Activated CD8-positive, alpha-beta T cell treated with anti-CD3 and anti-CD28 coated beads for 36 hours (primary cell): ENCODE measurements at regions of chr10 and their contacts with region 1.

Region 1: DNA sequence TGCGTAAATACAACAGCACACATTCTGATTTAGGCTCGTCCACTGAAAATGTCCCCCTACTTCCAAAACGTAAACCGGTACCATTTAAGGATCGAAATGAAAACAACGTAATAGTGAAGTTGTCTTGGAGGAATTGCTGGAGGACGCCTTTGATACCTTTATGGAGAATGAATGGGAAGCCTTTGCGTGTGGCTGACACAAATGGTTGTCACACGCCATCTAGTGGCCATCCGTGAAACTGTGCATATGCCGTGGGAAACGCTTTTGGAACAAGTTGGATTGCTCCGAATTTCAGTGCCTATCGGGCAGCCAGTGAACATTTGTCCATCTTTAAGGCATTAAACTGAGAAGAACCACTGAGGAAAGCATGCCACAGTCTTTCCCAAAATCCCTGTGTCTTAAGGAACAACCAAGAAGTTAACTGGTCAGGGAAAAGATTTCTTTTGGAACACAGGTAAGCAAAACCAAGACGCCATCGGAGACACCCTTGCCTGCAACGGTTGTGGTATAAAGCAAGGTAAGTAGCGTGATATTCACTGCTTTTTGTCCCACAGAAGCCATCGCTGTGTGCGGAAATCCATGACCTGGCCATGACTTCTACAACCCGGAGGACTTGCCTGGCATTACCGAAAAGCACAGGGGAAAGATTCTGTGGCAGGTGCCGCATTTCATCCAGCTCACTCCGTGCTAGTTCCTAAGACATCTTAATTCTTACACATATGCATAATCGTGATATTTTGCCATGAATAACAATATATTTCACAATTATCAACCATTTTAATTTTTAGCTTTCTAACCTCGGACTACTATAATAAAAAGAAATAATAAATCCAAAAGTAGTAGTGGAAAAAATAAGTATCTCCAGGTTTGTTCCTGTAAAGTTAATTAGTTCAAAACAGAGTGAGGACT is 100.6 kb downstream of the FAM204A start:
- DNase-seq: peak; percentile 79
- ATAC-seq: no peak
- H3K4me3 Mint-ChIP-seq: no peak overlapping the region
- H3K27ac Mint-ChIP-seq: no peak overlapping the region
- H3K4me1 Mint-ChIP-seq: no peaks in the 10 kb centered on the region
- H3K27me3 Mint-ChIP-seq: peaks cover 35% of the 10 kb centered on the region
- CTCF ChIP-seq: peak; percentile 97

Region 2: GRCh38 chr10:117496616-117497028 is 744.9 kb before region 1 on chr10:
- CTCF ChIA-PET with region 1: interaction called, 64 read pairs
- POLR2A ChIA-PET with region 1: no interaction called
- intact Hi-C with region 1: loop called (anchors 2 kb)
- DNase-seq: peak; percentile 77
- ATAC-seq: peak; percentile 86
- H3K4me3 Mint-ChIP-seq: no peak overlapping the region
- H3K27ac Mint-ChIP-seq: no peak overlapping the region
- H3K4me1 Mint-ChIP-seq: no peaks in the 10 kb centered on the region
- H3K27me3 Mint-ChIP-seq: peaks cover 29% of the 10 kb centered on the region
- CTCF ChIP-seq: peak; percentile 95

Region 3: GRCh38 chr10:117972168-117972837 is 269.2 kb before region 1 on chr10:
- CTCF ChIA-PET with region 1: no interaction called
- POLR2A ChIA-PET with region 1: no interaction called
- intact Hi-C with region 1: no loop called
- DNase-seq: no peak
- ATAC-seq: no peak
- H3K4me3 Mint-ChIP-seq: no peak overlapping the region
- H3K27ac Mint-ChIP-seq: no peak overlapping the region
- H3K4me1 Mint-ChIP-seq: no peaks in the 10 kb centered on the region
- H3K27me3 Mint-ChIP-seq: peaks cover 20% of the 10 kb centered on the region
- CTCF ChIP-seq: no peak

Region 4: DNA sequence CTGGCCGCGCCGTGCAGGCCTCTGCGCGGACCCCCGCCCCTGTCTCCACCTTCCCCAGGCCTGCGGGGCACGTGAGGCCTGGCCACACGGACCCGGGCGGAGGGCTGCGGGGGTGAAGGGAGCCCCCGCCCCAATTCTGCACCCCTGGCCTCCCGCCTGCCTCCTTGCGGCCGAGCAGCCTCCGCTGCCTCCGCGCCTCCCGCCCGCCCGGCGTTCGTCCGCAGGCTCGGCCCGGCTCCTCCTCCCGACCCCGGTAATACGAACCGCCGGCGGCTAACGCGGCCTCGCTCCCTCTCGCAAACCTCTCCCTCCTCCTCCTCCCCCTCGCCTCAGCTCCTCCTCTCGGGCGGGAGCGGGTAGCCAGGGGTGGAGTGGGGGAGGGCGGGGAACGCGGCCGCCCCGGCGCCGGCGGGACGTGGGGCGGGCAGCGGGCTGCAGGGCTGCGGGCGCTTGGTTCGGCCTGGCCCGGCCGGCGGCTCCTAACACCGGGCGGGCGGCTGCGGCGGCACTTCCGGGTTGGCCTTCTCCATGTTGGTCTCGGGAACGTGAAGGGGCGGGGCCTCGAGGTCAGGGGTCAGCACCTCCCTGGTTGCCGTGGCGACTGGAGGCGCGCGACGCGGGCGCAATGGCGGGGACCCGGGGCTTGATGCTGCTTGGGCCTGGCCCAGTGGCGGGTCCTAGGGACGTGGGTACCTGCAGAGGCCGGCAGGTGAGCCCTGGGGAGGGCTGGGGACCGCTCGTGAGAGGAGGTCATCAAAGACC is 194.9 kb before region 1 on chr10 and contains the start of gene RAB11FIP2:
- CTCF ChIA-PET with region 1: no interaction called
- POLR2A ChIA-PET with region 1: no interaction called
- intact Hi-C with region 1: no loop called
- DNase-seq: peak; percentile 97
- ATAC-seq: peak; percentile 95
- H3K4me3 Mint-ChIP-seq: peak within 1 kb of the TSS; percentile 94
- H3K27ac Mint-ChIP-seq: peak within 1 kb of the TSS; percentile 84
- H3K4me1 Mint-ChIP-seq: peaks cover 41% of the 10 kb centered on the region
- H3K27me3 Mint-ChIP-seq: no peaks in the 10 kb centered on the region
- CTCF ChIP-seq: no peak
- total RNA-seq, gene RAB11FIP2: 6.6 to 9.7 TPM

Region 5: GRCh38 chr10:118712930-118713634 is 471.6 kb after region 1 on chr10:
- CTCF ChIA-PET with region 1: no interaction called
- POLR2A ChIA-PET with region 1: no interaction called
- intact Hi-C with region 1: no loop called
- DNase-seq: no peak
- ATAC-seq: no peak
- H3K4me3 Mint-ChIP-seq: no peak overlapping the region
- H3K27ac Mint-ChIP-seq: no peak overlapping the region
- H3K4me1 Mint-ChIP-seq: peaks cover 14% of the 10 kb centered on the region
- H3K27me3 Mint-ChIP-seq: no peaks in the 10 kb centered on the region
- CTCF ChIP-seq: peak; percentile 13